Activated naive CD8-positive, alpha-beta T cell treated with anti-CD3 and anti-CD28 coated beads, Interleukin-2, amount 10 ng/mL, durations not matched to agents 7 days and 5 days (primary cell): ENCODE measurements at regions of chr11 and their contacts with region 1.

Region 1: GRCh38 chr11:46345131-46345597 is 2.1 kb upstream of the DGKZ start:
- DNase-seq: peak; percentile 55
- ATAC-seq: peak; percentile 13
- H3K4me3 Mint-ChIP-seq: peak overlapping the region; percentile 83
- H3K27ac Mint-ChIP-seq: peak overlapping the region; percentile 88
- H3K4me1 Mint-ChIP-seq: peaks cover 58% of the 10 kb centered on the region
- H3K27me3 Mint-ChIP-seq: no peaks in the 10 kb centered on the region

Region 2: GRCh38 chr11:46332568-46333393 is 12.4 kb before region 1 on chr11:
- POLR2A ChIA-PET with region 1: interaction called, 12 read pairs
- DNase-seq: peak; percentile 61
- ATAC-seq: peak; percentile 23
- H3K4me3 Mint-ChIP-seq: peak overlapping the region; percentile 51
- H3K27ac Mint-ChIP-seq: no peak overlapping the region
- H3K4me1 Mint-ChIP-seq: peaks cover 41% of the 10 kb centered on the region
- H3K27me3 Mint-ChIP-seq: peaks cover 31% of the 10 kb centered on the region

Region 3: DNA sequence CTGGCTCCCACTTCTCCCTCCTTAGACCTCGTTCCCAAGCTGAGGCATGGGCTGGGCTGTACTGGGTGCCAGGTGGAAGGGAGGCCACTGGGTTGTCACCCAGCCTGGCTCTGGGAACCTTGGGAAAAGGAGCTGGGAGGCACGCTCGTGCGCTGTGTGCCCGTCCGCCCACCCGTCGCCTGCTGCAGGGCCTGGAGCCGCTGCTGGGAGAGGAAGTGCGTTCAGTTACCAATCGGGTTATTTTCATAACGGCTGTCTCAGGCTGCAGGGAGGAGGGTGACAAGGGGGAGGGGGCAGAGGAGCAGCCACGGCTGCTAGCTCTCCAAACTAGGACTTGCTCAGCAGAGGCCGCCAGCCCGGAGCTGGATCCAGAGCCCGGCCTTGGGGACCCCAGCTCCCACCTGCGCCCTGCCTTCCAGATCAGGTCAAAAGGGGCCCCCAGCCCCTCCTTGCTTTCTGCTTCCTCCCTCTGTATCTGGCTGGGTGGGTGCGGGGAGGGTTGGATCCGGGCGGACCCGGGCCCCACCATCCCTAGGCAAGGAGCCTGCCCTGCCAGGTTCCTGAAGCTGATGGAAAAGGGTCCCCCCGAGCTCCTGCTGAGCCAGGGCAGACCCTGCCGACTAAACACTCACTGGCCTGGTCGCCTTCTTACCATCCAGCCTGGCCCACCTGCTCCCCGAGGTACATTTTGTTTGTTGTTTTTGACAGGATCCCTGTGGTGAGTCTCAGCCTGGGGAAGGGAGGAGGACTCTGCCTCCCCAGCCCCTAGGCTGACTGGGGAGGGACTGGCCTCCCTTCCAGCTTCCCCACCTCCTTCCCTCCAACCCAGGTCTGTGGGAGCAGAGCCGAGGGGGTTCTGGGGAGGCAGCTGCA is 16.4 kb after region 1 on chr11:
- POLR2A ChIA-PET with region 1: interaction called, 13 read pairs
- DNase-seq: peak; percentile 66
- ATAC-seq: peak; percentile 93
- H3K4me3 Mint-ChIP-seq: peak overlapping the region; percentile 86
- H3K27ac Mint-ChIP-seq: peak overlapping the region; percentile 88
- H3K4me1 Mint-ChIP-seq: peaks cover 28% of the 10 kb centered on the region
- H3K27me3 Mint-ChIP-seq: no peaks in the 10 kb centered on the region

Region 4: GRCh38 chr11:46366661-46367161 is 21.5 kb after region 1 on chr11:
- POLR2A ChIA-PET with region 1: interaction called, 13 read pairs
- DNase-seq: no peak
- ATAC-seq: no peak
- H3K4me3 Mint-ChIP-seq: no peak overlapping the region
- H3K27ac Mint-ChIP-seq: no peak overlapping the region
- H3K4me1 Mint-ChIP-seq: peaks cover 15% of the 10 kb centered on the region
- H3K27me3 Mint-ChIP-seq: no peaks in the 10 kb centered on the region